ENCODE measurements at regions of chr19 and their contacts with region 1.

Region 1: DNA sequence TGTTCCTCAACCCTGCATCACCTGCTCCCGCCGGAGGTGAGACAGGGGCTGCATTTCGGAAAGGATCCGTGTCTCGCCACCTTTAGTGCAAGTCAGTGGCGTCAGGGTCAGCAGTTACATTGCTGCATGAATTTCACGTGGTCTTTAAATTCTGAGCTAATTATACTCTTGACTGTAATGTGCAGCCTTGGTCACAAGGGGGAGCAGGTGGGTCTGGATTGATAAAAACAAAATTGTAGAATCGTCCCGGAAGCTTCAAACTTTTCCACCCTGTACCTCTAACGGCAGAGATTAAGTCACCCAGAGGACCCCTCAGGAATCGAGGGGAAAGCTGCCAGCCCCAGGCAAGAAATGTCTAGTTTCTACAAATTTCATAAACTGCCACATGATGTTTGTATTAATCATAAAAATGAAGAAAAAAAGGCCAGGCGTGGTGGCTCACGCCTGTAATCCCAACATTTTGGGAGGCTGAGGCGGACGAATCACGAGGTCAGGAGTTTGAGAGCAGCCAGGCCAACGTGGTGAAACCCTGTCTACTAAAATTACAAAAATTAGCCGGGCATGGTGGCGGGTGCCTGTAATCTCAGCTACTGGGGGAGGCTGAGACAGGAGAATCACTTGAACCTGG is 20.2 kb downstream of the BBC3 start:
- DNase-seq: peak; percentile 92
- H3K4me3 ChIP-seq: no peak overlapping the region
- H3K27ac ChIP-seq: peak overlapping the region; percentile 40
- H3K4me1 ChIP-seq: no peaks in the 10 kb centered on the region
- H3K27me3 ChIP-seq: no peaks in the 10 kb centered on the region
- CTCF ChIP-seq: peak; percentile 79

Region 2: GRCh38 chr19:47112997-47113849 is 97.6 kb before region 1 on chr19 and contains the start of gene ZC3H4:
- intact Hi-C with region 1: no loop called
- DNase-seq: peak; percentile 99
- H3K4me3 ChIP-seq: peak within 1 kb of the TSS; percentile 81
- H3K27ac ChIP-seq: peak within 1 kb of the TSS; percentile 100
- H3K4me1 ChIP-seq: peaks cover under 1% of the 10 kb centered on the region
- H3K27me3 ChIP-seq: no peaks in the 10 kb centered on the region
- CTCF ChIP-seq: no peak
- total RNA-seq, gene ZC3H4: 27.2 to 62.2 TPM

Region 3: GRCh38 chr19:47143322-47144073 is 67.3 kb before region 1 on chr19:
- intact Hi-C with region 1: no loop called
- DNase-seq: no peak
- H3K4me3 ChIP-seq: no peak overlapping the region
- H3K27ac ChIP-seq: no peak overlapping the region
- H3K4me1 ChIP-seq: no peaks in the 10 kb centered on the region
- H3K27me3 ChIP-seq: no peaks in the 10 kb centered on the region
- CTCF ChIP-seq: no peak

Region 4: GRCh38 chr19:47157431-47158321 is 53.1 kb before region 1 on chr19:
- intact Hi-C with region 1: loop called (anchors 10 kb)
- DNase-seq: peak; percentile 62
- H3K4me3 ChIP-seq: no peak overlapping the region
- H3K27ac ChIP-seq: peak overlapping the region; percentile 84
- H3K4me1 ChIP-seq: peaks cover 25% of the 10 kb centered on the region
- H3K27me3 ChIP-seq: no peaks in the 10 kb centered on the region
- CTCF ChIP-seq: no peak

Region 5: GRCh38 chr19:47257444-47258169 is 46.8 kb after region 1 on chr19:
- intact Hi-C with region 1: no loop called
- DNase-seq: no peak
- H3K4me3 ChIP-seq: peak overlapping the region; percentile 38
- H3K27ac ChIP-seq: peak overlapping the region; percentile 90
- H3K4me1 ChIP-seq: no peaks in the 10 kb centered on the region
- H3K27me3 ChIP-seq: no peaks in the 10 kb centered on the region
- CTCF ChIP-seq: no peak

Region 6: GRCh38 chr19:47618771-47619170 is 408.0 kb after region 1 on chr19:
- intact Hi-C with region 1: no loop called
- DNase-seq: no peak
- H3K4me3 ChIP-seq: no peak overlapping the region
- H3K27ac ChIP-seq: no peak overlapping the region
- H3K4me1 ChIP-seq: no peaks in the 10 kb centered on the region
- H3K27me3 ChIP-seq: no peaks in the 10 kb centered on the region
- CTCF ChIP-seq: no peak

Measured in colonic mucosa (tissue), 4 donors.